Caco-2 (cell line): ENCODE measurements at regions of chr3 and their contacts with region 1.

Region 1: GRCh38 chr3:3628676-3629328 is 170.4 kb upstream of the LRRN1 start:
- DNase-seq: no peak
- H3K4me3 ChIP-seq: no peak overlapping the region
- H3K4me3 Mint-ChIP-seq: no peak overlapping the region
- H3K27ac Mint-ChIP-seq: no peak overlapping the region
- H3K4me1 ChIP-seq: peaks cover 15% of the 10 kb centered on the region
- H3K4me1 Mint-ChIP-seq: peaks cover 12% of the 10 kb centered on the region
- H3K27me3 ChIP-seq: no peaks in the 10 kb centered on the region
- H3K27me3 Mint-ChIP-seq: no peaks in the 10 kb centered on the region
- CTCF ChIP-seq: no peak

Region 2: DNA sequence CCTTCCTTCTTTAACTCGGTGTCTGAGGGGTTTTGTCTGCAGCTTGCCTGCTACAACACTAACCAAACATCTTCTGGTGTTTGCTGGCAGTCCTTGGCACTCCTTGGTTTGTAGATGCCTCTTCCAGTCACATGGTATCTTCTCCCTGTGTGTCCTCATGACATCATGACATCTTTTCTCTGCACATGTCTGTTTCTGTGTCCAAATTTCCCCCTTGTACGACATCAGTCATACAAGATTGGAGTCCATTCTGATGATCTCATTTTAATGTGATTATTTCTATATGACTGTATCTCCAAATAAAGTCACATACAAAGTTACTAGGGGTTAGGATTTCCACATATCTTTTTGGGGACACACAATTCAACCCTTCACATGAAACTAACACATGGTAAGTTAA is 18.1 kb after region 1 on chr3:
- CTCF ChIA-PET with region 1: no interaction called
- POLR2A ChIA-PET with region 1: no interaction called
- intact Hi-C with region 1: loop called (anchors 1 kb)
- DNase-seq: no peak
- H3K4me3 ChIP-seq: no peak overlapping the region
- H3K4me3 Mint-ChIP-seq: peak overlapping the region; percentile 45
- H3K27ac Mint-ChIP-seq: peak overlapping the region; percentile 81
- H3K4me1 ChIP-seq: peaks cover 25% of the 10 kb centered on the region
- H3K4me1 Mint-ChIP-seq: peaks cover 33% of the 10 kb centered on the region
- H3K27me3 ChIP-seq: no peaks in the 10 kb centered on the region
- H3K27me3 Mint-ChIP-seq: no peaks in the 10 kb centered on the region
- CTCF ChIP-seq: no peak

Region 3: DNA sequence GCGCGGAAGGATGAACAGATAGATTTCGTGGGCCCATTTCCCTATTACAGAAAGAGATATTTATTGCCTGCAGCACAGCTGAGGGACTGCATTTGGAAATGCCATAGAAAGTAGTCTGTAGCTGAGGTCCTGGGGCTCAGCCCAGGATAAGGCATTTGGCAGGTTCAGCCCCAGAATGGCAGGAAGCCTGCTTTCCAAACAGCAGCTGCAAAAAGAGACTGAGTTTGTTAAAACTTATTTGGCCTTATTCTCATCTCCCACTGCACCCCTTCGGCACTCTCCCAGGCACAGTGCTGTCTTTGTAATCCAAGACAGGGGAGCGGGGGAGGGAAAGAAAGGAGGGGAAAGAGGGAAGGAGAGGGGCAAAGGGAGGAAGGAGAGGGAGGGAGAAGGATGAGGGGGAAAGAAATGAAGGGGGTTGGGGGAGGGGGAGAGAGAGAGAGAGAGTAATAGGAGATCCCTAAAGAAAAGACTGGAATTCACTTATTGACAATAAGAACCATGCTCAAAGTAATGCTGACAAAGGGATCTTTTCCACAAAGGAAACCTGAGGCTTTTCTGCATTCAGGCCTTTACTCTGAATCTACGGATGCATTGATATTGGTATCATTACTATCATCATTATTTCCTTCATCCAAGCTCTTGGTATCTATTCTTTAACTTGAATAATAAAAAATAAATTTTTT is 76.4 kb after region 1 on chr3:
- CTCF ChIA-PET with region 1: no interaction called
- POLR2A ChIA-PET with region 1: no interaction called
- intact Hi-C with region 1: loop called (anchors 5 kb)
- DNase-seq: no peak
- H3K4me3 ChIP-seq: no peak overlapping the region
- H3K4me3 Mint-ChIP-seq: no peak overlapping the region
- H3K27ac Mint-ChIP-seq: no peak overlapping the region
- H3K4me1 ChIP-seq: peaks cover 26% of the 10 kb centered on the region
- H3K4me1 Mint-ChIP-seq: peaks cover 22% of the 10 kb centered on the region
- H3K27me3 ChIP-seq: no peaks in the 10 kb centered on the region
- H3K27me3 Mint-ChIP-seq: no peaks in the 10 kb centered on the region
- CTCF ChIP-seq: no peak

Region 4: GRCh38 chr3:3799173-3800079 is 170.6 kb after region 1 on chr3 and contains the start of gene LRRN1:
- CTCF ChIA-PET with region 1: no interaction called
- POLR2A ChIA-PET with region 1: no interaction called
- intact Hi-C with region 1: no loop called
- DNase-seq: peak in 1 of 2 experiments; percentile 22
- H3K4me3 ChIP-seq: peak within 1 kb of the TSS; percentile 40
- H3K4me3 Mint-ChIP-seq: peak within 1 kb of the TSS; percentile 75
- H3K27ac Mint-ChIP-seq: no peak within 1 kb of the TSS
- H3K4me1 ChIP-seq: no peaks in the 10 kb centered on the region
- H3K4me1 Mint-ChIP-seq: no peaks in the 10 kb centered on the region
- H3K27me3 ChIP-seq: no peaks in the 10 kb centered on the region
- H3K27me3 Mint-ChIP-seq: peaks cover 8% of the 10 kb centered on the region
- CTCF ChIP-seq: no peak
- total RNA-seq, gene LRRN1: 0.84 and 1.2 TPM in 2 replicates